ENCODE measurements at regions of chr16 and their contacts with region 1.

Region 1: GRCh38 chr16:14529010-14529669 is 100.9 kb downstream of the PARN start:
- DNase-seq: peak; percentile 72 to 96 (median 84)
- H3K4me3 ChIP-seq: peak overlapping the region; percentile 23 to 55 (median 51)
- H3K27ac ChIP-seq: no peak overlapping the region
- H3K4me1 ChIP-seq: peaks cover 4 to 17% (median 7%) of the 10 kb centered on the region in 3 donors
- H3K27me3 ChIP-seq: no peaks in the 10 kb centered on the region
- CTCF ChIP-seq: peak; percentile 93

Region 2: GRCh38 chr16:14300705-14301168 is 228.4 kb before region 1 on chr16:
- intact Hi-C with region 1: loop called (anchors 10 kb)
- DNase-seq: peak; percentile 66 to 87 (median 81)
- H3K4me3 ChIP-seq: peak overlapping the region in 1 of 3 donors; percentile 71
- H3K27ac ChIP-seq: no peak overlapping the region
- H3K4me1 ChIP-seq: peaks cover 0 to 3% (median 0%) of the 10 kb centered on the region in 3 donors
- H3K27me3 ChIP-seq: no peaks in the 10 kb centered on the region
- CTCF ChIP-seq: peak; percentile 70

Region 3: DNA sequence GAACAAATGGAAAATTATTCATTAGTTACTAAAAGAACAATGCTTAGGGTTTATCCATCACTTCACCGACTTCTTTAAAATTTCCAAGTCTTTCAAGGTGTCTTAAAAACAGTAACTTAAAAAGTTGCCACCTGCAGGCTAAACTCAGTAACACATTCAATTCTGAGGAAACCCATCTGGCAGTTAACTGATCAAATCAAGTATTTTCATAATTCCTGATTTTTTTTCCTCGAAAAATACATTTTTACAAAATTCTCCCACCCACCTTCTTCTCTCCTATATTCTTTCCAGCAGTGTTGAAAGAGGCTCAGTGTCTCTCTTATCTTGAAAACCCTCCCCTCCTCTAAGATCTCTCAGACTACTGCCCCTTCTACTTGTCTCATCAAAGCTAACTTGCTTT is 71.0 kb after region 1 on chr16:
- intact Hi-C with region 1: no loop called
- DNase-seq: peak in 2 of 5 donors; percentile 13 to 41
- H3K4me3 ChIP-seq: no peak overlapping the region
- H3K27ac ChIP-seq: no peak overlapping the region
- H3K4me1 ChIP-seq: no peaks in the 10 kb centered on the region
- H3K27me3 ChIP-seq: no peaks in the 10 kb centered on the region
- CTCF ChIP-seq: peak; percentile 32